CD4-positive, alpha-beta T cell (primary cell): ENCODE measurements at regions of chr19 and their contacts with region 1.

Region 1: GRCh38 chr19:29610563-29611271 is 4.6 kb downstream of the POP4 start:
- DNase-seq: peak; percentile 77 to 92 (median 81)
- ATAC-seq: peak; percentile 53
- H3K4me3 ChIP-seq: no peak overlapping the region
- H3K4me3 Mint-ChIP-seq: peak overlapping the region; percentile 52
- H3K27ac ChIP-seq: no peak overlapping the region
- H3K27ac Mint-ChIP-seq: peak overlapping the region; percentile 38
- H3K4me1 ChIP-seq: peaks cover 29% of the 10 kb centered on the region
- H3K4me1 Mint-ChIP-seq: peaks cover 29% of the 10 kb centered on the region
- H3K27me3 ChIP-seq: no peaks in the 10 kb centered on the region
- H3K27me3 Mint-ChIP-seq: no peaks in the 10 kb centered on the region
- CTCF ChIP-seq: peak; percentile 79

Region 2: DNA sequence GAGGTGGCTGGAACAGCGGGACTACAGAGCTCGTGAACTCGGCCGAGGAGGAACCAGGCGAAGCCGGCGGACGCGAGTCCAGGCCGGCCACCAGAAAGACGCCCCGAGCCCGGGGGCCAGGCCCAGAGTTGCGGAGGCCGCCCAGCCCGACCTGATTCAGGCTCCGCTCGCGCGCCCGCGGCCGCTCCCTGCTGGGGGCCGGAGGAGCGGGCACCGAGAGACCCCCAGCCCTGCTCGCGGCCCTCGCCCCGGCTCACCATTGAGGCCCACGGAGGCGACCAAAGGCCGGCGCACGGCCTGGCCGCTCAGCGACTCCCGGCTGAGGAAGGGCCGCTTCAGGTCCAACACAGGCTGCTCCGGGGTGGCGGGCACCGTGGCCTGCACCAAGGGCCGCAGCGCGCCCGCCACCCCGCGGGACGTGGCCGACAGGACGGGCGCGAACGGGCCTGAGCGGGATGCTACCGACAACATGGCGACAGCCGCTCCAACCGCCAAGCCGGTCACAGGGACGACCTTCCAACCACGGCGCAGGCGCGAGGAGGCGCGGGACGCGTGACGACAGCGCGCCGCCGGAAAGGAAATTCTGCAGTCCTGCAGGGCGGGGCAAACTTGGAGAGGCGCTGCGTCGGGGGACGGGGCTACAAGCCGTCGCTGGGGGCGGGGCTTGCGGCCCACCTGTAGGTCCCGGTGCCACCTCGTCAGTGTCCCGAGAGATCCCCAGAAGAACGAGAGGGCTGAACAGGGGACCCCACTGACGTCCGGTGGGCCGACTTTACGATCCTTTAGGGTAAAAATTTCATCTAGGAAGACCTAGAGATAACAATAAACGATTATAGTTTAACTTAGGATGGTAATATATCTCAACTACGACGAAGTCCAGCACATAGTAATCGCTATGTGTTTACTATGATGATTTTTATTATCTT is 397.8 kb before region 1 on chr19 and contains the start of gene UQCRFS1:
- CTCF ChIA-PET with region 1: no interaction called
- POLR2A ChIA-PET with region 1: no interaction called
- intact Hi-C with region 1: loop called in 1 of 2 experiments (anchors 5 kb)
- DNase-seq: peak; percentile 91 to 97 (median 94)
- ATAC-seq: peak; percentile 96
- H3K4me3 ChIP-seq: peak within 1 kb of the TSS; percentile 74
- H3K4me3 Mint-ChIP-seq: peak within 1 kb of the TSS; percentile 99
- H3K27ac ChIP-seq: peak within 1 kb of the TSS; percentile 67 to 78
- H3K27ac Mint-ChIP-seq: peak within 1 kb of the TSS; percentile 96
- H3K4me1 ChIP-seq: peaks cover 10% of the 10 kb centered on the region
- H3K4me1 Mint-ChIP-seq: peaks cover 54% of the 10 kb centered on the region
- H3K27me3 ChIP-seq: no peaks in the 10 kb centered on the region
- H3K27me3 Mint-ChIP-seq: peaks cover 14% of the 10 kb centered on the region
- CTCF ChIP-seq: no peak
- total RNA-seq, gene UQCRFS1: 30.5 TPM

Region 3: DNA sequence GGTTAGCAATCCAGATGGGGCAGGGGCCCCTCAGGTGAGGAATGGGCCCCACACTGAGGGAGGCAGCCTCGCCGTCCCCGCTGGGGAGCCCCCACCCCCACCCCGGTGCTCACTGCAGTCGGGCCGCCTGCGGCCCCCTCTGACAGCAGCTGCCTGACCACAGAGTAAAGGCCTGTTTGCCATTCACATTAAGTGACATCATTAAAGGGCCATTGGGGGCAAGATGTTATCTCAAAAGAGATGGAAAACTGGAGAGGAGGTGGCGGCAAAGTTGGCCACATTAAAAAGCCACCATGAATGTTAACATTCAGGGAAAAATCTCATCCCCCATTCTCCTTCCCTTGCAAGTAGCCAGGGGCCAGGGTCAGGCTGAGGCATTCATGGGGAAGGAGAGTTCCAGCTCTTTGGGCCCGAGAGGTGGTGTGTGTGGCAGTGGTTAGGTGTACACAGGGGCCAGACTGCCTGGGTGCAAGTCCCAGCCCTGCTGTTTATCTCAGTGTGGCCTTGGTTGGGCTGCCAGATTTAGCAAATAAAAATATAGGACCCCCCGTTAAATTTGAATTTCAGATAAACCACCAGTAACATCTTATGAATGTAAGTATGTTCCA is 64.0 kb before region 1 on chr19:
- CTCF ChIA-PET with region 1: no interaction called
- POLR2A ChIA-PET with region 1: no interaction called
- intact Hi-C with region 1: no loop called
- DNase-seq: no peak
- ATAC-seq: no peak
- H3K4me3 ChIP-seq: no peak overlapping the region
- H3K4me3 Mint-ChIP-seq: no peak overlapping the region
- H3K27ac ChIP-seq: no peak overlapping the region
- H3K27ac Mint-ChIP-seq: no peak overlapping the region
- H3K4me1 ChIP-seq: no peaks in the 10 kb centered on the region
- H3K4me1 Mint-ChIP-seq: no peaks in the 10 kb centered on the region
- H3K27me3 ChIP-seq: peaks cover 0 to 7% of the 10 kb centered on the region in 2 experiments
- H3K27me3 Mint-ChIP-seq: peaks cover 32% of the 10 kb centered on the region
- CTCF ChIP-seq: no peak

Region 4: GRCh38 chr19:29576761-29577648 is 33.7 kb before region 1 on chr19:
- CTCF ChIA-PET with region 1: no interaction called
- POLR2A ChIA-PET with region 1: no interaction called
- intact Hi-C with region 1: no loop called
- DNase-seq: no peak
- ATAC-seq: no peak
- H3K4me3 ChIP-seq: no peak overlapping the region
- H3K4me3 Mint-ChIP-seq: no peak overlapping the region
- H3K27ac ChIP-seq: no peak overlapping the region
- H3K27ac Mint-ChIP-seq: no peak overlapping the region
- H3K4me1 ChIP-seq: no peaks in the 10 kb centered on the region
- H3K4me1 Mint-ChIP-seq: no peaks in the 10 kb centered on the region
- H3K27me3 ChIP-seq: peaks cover 6 to 29% of the 10 kb centered on the region in 2 experiments
- H3K27me3 Mint-ChIP-seq: peaks cover 73% of the 10 kb centered on the region
- CTCF ChIP-seq: no peak

Region 5: GRCh38 chr19:29671393-29672160 is 60.9 kb after region 1 on chr19:
- CTCF ChIA-PET with region 1: interaction called, 33 read pairs
- POLR2A ChIA-PET with region 1: interaction called, 107 read pairs
- intact Hi-C with region 1: loop called in 1 of 2 experiments (anchors 2 kb)
- DNase-seq: peak; percentile 73 to 94 (median 89)
- ATAC-seq: peak; percentile 63
- H3K4me3 ChIP-seq: peak overlapping the region; percentile 30
- H3K4me3 Mint-ChIP-seq: peak overlapping the region; percentile 68
- H3K27ac ChIP-seq: peak overlapping the region; percentile 78 to 86
- H3K27ac Mint-ChIP-seq: peak overlapping the region; percentile 98
- H3K4me1 ChIP-seq: peaks cover 98% of the 10 kb centered on the region
- H3K4me1 Mint-ChIP-seq: peaks cover 88% of the 10 kb centered on the region
- H3K27me3 ChIP-seq: no peaks in the 10 kb centered on the region
- H3K27me3 Mint-ChIP-seq: no peaks in the 10 kb centered on the region
- CTCF ChIP-seq: peak; percentile 56

Region 6: DNA sequence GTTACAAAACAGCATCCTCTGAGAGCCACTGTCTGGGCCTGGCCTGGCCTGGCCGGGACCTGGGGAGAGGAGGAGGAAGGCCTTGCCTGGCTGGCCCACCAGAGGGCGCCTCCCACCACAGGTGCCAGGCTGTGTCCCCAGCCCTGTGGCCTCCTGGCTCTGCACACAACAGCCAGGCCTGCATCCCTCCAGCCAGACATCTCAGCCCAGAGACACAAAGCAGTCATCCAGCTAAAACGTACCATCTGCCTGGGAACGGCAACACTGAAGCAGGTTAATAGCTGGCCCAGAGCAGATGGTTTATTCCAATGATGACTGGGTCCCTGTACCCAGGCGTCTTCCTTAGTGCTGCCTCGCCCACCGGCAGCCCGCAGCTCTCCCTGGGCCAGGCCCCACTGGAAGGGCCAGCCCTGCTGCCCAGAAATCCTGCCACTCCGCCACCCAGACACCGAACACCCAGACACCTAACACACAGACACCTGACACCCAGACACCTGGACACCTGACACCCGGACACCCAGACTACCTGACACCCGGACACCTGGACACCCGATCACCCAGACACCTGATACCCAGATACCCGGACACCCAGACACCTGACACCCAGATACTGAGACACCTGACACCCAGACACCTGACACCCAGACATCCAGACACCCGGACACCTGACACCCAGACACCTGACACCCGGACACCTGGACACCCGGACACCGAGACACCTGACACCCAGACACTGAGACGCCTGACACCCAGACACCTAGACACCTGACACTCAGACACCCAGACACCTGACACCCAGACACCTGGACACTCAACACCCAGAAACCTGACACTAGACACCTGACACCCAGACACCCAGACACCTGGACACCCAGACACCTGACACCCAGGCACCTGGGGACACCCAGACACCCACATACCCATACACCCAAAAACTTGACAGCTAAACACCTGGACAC is 84.2 kb after region 1 on chr19:
- CTCF ChIA-PET with region 1: interaction called, 14 read pairs
- POLR2A ChIA-PET with region 1: interaction called, 19 read pairs
- intact Hi-C with region 1: loop called (anchors 1 kb)
- DNase-seq: peak; percentile 73 to 90 (median 80)
- ATAC-seq: peak; percentile 95
- H3K4me3 ChIP-seq: no peak overlapping the region
- H3K4me3 Mint-ChIP-seq: no peak overlapping the region
- H3K27ac ChIP-seq: no peak overlapping the region
- H3K27ac Mint-ChIP-seq: peak overlapping the region; percentile 61
- H3K4me1 ChIP-seq: peaks cover 24% of the 10 kb centered on the region
- H3K4me1 Mint-ChIP-seq: peaks cover 18% of the 10 kb centered on the region
- H3K27me3 ChIP-seq: no peaks in the 10 kb centered on the region
- H3K27me3 Mint-ChIP-seq: no peaks in the 10 kb centered on the region
- CTCF ChIP-seq: peak; percentile 92

Region 7: GRCh38 chr19:29777781-29778309 is 167.1 kb after region 1 on chr19:
- CTCF ChIA-PET with region 1: no interaction called
- POLR2A ChIA-PET with region 1: no interaction called
- intact Hi-C with region 1: no loop called
- DNase-seq: no peak
- ATAC-seq: no peak
- H3K4me3 ChIP-seq: no peak overlapping the region
- H3K4me3 Mint-ChIP-seq: no peak overlapping the region
- H3K27ac ChIP-seq: no peak overlapping the region
- H3K27ac Mint-ChIP-seq: no peak overlapping the region
- H3K4me1 ChIP-seq: no peaks in the 10 kb centered on the region
- H3K4me1 Mint-ChIP-seq: no peaks in the 10 kb centered on the region
- H3K27me3 ChIP-seq: no peaks in the 10 kb centered on the region
- H3K27me3 Mint-ChIP-seq: no peaks in the 10 kb centered on the region
- CTCF ChIP-seq: no peak

Region 8: DNA sequence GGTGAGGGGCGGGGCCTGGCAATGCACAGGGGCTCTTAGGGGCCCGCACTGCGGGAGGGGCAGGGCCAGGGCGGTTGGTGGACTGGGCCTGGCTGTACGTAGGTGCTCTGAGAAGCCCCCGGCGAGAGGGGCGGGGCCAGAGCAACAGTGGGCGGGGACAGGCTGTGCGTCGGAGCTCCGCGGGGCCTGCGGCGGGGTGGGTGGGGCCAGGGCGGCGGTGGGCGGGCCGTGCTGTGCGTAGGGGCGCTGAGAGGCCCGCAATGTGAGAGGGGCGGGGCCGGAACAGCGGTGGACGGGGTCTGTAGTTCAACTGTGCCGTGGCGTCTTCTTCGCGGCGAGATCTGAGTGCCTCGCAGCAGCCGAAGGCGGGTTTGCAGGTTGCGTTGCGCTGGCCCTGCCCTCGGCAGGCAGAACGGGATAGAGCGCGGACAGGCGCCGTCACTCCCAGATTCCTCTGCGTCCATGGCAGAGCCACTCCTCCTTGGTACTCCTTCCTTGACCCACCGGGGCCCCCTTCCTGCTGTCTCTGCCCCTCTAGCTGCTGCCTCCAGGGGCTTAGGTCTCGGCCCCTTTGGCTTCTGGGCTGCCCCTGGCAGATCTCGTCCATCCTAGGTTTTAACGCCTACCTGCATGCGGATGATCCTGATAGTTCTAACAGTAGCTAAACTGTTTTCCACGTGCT is 234.3 kb after region 1 on chr19:
- CTCF ChIA-PET with region 1: no interaction called
- POLR2A ChIA-PET with region 1: interaction called, 29 read pairs
- intact Hi-C with region 1: loop called in 1 of 2 experiments (anchors 5 kb)
- DNase-seq: peak; percentile 94 to 99 (median 96)
- ATAC-seq: peak; percentile 80
- H3K4me3 ChIP-seq: peak overlapping the region; percentile 99
- H3K4me3 Mint-ChIP-seq: peak overlapping the region; percentile 95
- H3K27ac ChIP-seq: peak overlapping the region; percentile 76
- H3K27ac Mint-ChIP-seq: peak overlapping the region; percentile 93
- H3K4me1 ChIP-seq: peaks cover 24% of the 10 kb centered on the region
- H3K4me1 Mint-ChIP-seq: peaks cover 22% of the 10 kb centered on the region
- H3K27me3 ChIP-seq: no peaks in the 10 kb centered on the region
- H3K27me3 Mint-ChIP-seq: no peaks in the 10 kb centered on the region
- CTCF ChIP-seq: no peak